ENCODE measurements at regions of chr19 and their contacts with region 1.

Region 1: GRCh38 chr19:48255376-48256303 is at the start of gene CARD8:
- DNase-seq: peak; percentile 89
- H3K4me3 Mint-ChIP-seq: peak within 1 kb of the TSS; percentile 93
- H3K27ac Mint-ChIP-seq: peak within 1 kb of the TSS; percentile 99
- H3K4me1 Mint-ChIP-seq: peaks cover 79% of the 10 kb centered on the region
- H3K27me3 Mint-ChIP-seq: no peaks in the 10 kb centered on the region

Region 2: DNA sequence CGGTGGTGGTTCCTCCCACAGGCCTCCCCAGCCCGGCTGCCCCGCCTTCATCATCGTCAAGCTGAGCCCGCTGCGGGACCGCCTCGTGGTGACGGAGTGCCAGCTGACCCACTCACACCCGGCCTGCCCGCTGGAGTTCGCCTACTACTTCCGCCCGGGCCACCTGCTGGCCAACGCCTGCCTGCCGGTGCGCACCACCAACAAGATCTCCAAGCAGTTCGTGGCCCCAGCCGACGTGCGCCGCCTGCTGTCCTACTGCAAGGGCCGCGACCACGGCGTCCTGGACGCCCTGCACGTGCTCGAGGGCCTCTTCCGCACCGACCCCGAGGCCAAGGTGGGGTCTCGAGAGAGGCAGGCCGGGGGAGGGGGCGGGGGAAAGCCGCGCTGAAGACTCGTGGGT is 73.2 kb before region 1 on chr19:
- CTCF ChIA-PET with region 1: no interaction called
- DNase-seq: no peak
- H3K4me3 Mint-ChIP-seq: no peak overlapping the region
- H3K27ac Mint-ChIP-seq: no peak overlapping the region
- H3K4me1 Mint-ChIP-seq: no peaks in the 10 kb centered on the region
- H3K27me3 Mint-ChIP-seq: no peaks in the 10 kb centered on the region

Region 3: GRCh38 chr19:48203732-48204628 is 51.7 kb before region 1 on chr19:
- CTCF ChIA-PET with region 1: interaction called, 19 read pairs
- DNase-seq: peak; percentile 95
- H3K4me3 Mint-ChIP-seq: no peak overlapping the region
- H3K27ac Mint-ChIP-seq: no peak overlapping the region
- H3K4me1 Mint-ChIP-seq: peaks cover 23% of the 10 kb centered on the region
- H3K27me3 Mint-ChIP-seq: no peaks in the 10 kb centered on the region

Region 4: GRCh38 chr19:48403606-48404005 is 148.0 kb after region 1 on chr19:
- CTCF ChIA-PET with region 1: no interaction called
- DNase-seq: peak; percentile 74
- H3K4me3 Mint-ChIP-seq: no peak overlapping the region
- H3K27ac Mint-ChIP-seq: peak overlapping the region; percentile 33
- H3K4me1 Mint-ChIP-seq: peaks cover 18% of the 10 kb centered on the region
- H3K27me3 Mint-ChIP-seq: peaks cover 34% of the 10 kb centered on the region